Cardiac septum (tissue), 1 donor: ENCODE measurements at regions of chr18 and their contacts with region 1.

Region 1: DNA sequence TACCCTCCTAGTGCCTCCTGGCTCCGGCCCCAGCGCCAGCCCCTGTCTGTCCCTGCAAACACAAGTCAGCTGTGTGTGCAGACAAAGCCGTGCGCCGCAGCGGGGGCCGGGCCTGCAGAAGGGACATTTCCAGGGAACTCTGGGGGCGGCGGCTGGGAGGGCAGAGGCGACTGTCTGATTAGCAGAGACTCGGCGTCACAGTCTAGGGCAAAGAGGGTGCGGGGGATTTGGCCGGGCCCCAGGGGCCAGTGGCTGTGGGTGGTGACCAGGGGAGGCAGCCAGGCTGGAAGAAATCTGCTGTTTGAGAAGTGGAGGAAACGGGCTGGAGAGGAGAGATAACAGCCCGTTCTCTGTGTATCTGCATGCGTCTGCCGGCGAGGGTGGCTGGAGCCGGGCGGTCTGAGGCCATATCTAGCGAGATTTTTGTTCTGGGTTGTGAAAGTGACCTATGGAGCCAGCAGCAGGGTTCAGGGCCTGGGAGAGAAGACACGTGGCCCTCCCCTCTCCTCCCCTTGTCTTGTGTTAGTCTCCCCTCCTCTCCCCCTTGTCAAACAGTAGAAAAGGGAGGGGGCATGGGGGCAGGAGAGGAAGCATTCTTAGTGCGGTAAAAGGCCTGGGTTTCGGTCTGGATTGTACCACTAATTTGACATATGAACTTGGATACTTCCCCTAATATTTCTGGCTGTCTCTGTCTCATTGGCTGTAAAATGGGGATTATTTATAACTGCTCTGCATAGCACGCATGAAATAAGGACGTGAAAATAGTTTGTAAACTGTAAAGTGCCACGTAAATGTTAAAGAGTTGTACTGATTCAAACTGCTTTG is 169.4 kb downstream of the SMAD7 start:
- DNase-seq: peak; percentile 96

Region 2: GRCh38 chr18:48680339-48681221 is 100.8 kb before region 1 on chr18:
- intact Hi-C with region 1: loop called (anchors 2 kb)
- DNase-seq: peak; percentile 93

Region 3: GRCh38 chr18:48711651-48712486 is 69.5 kb before region 1 on chr18:
- intact Hi-C with region 1: loop called (anchors 5 kb)
- DNase-seq: no peak

Region 4: GRCh38 chr18:48767090-48767690 is 14.2 kb before region 1 on chr18:
- intact Hi-C with region 1: no loop called
- DNase-seq: no peak

Region 5: DNA sequence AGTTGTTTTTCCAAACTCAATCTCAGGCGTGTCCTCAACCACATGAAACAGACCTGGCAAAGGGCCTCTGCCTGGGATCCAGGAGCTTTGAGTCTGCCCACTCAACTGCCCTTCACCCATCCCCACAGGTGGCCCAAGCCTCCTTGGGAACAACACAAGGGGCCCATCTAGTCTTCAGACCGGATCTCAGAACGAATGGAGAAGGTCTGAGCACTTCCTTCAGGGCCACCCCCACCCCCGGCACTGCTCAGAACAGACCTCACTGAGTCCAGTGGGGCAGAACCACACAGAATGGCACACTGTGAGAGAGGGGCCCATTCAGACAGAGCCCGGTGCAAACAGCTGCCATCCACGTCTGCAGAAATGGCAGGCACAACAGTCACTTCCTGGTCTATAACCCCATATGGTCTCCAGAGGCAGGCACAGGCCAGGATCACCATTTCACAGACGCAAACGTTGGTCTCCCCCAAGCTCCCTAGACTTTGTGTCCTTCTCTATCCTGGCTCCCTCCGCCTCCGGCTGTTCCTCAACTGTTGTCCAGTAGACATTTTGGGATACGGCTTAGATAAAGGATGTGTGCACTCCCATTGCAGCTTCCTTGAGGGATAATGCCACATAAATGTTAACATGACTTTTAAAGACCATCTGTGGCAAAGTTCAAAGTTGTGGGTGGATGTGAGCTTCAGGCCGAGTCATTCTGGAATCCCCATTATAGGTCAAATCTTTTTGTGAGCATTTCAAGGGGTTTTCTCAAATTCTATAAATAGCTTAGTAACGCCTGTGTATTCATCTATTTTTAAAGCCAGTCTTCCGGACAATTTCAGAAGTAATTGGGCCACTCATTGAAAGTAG is 19.7 kb after region 1 on chr18:
- intact Hi-C with region 1: loop called (anchors 1 kb)
- DNase-seq: peak; percentile 75

Region 6: DNA sequence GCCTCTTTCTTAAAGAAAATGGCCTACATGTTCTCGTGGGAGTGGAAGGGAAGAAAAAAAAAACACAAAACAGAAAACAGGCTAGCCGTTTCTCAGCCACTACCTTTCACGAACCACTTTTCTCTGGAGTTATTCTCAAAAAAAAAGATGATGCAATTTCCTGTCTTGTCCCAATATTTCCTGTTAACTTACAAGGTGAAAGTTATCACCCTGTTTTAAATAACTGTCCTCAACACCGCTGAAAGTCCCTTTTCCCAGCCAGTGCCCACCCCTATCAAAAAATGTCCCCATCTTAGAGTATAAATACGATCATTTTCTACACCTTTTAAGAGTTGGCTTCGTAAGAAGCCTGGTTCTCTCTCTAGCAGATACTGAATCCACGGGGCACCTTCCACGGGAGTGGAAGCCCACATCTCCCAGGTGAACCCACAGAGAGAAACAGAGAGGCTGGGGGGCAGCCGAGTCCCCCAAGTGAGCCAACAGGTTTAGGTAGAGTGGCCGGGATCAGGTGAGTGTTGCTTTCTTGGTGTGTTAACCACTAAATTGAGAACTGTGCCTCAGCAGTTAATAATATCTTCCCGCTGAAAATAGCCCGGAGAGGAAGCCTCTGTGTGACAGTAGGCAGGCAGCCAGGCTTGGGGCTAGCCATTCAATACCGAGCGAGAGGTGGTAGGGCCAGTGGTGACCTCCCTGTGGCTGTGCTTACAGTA is 153.5 kb after region 1 on chr18:
- intact Hi-C with region 1: loop called (anchors 5 kb)
- DNase-seq: peak; percentile 91

Region 7: GRCh38 chr18:49041435-49042245 is 260.3 kb after region 1 on chr18:
- intact Hi-C with region 1: loop called (anchors 10 kb)
- DNase-seq: no peak